ENCODE measurements at regions of chr2 and their contacts with region 1.

Region 1: DNA sequence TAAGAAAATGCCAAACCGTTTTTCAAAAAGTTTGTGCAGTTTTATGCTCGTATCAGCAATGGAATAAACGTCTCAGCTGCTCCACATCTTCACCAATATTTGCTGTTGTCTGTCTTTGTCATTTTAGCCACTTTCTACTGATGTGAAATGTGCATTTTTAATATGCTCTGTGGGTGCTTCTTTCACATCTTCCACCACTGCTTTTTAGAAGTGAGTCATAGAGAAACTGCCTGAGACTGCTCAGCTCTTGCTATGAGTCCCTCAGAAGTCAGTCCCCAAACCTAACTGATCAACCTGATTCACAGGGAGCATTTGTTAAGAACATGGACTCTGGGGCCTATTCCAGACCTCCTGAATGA is 41.0 kb upstream of the EPC2 start:
- DNase-seq: no peak
- H3K4me3 ChIP-seq: no peak overlapping the region
- H3K27ac ChIP-seq: no peak overlapping the region
- H3K4me1 ChIP-seq: no peaks in the 10 kb centered on the region
- H3K27me3 ChIP-seq: no peaks in the 10 kb centered on the region
- CTCF ChIP-seq: no peak

Region 2: GRCh38 chr2:148622366-148622765 is 18.8 kb after region 1 on chr2:
- intact Hi-C with region 1: no loop called
- DNase-seq: no peak
- H3K4me3 ChIP-seq: no peak overlapping the region
- H3K27ac ChIP-seq: no peak overlapping the region
- H3K4me1 ChIP-seq: peaks cover 0 to 2% of the 10 kb centered on the region in 2 donors
- H3K27me3 ChIP-seq: no peaks in the 10 kb centered on the region
- CTCF ChIP-seq: no peak

Region 3: DNA sequence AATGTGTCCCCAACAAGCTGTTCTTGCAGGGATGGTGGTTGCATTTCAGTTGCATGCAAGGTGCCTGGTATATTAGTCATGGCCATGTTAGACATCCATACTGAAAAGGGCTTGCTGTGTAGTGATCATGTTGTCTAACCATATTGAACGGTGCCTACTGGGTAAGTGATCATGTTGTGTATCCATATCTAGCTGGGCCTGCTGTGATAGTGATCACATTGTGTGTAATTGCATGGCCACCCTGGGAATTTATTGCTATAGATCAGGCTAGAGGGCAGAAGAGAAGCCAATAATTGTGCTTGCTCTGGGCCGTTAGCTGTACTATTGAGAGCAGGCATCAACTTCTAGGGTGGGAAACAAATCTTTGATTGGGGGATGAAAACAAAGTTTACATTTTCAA is 31.2 kb after region 1 on chr2:
- intact Hi-C with region 1: loop called (anchors 5 kb)
- DNase-seq: no peak
- H3K4me3 ChIP-seq: no peak overlapping the region
- H3K27ac ChIP-seq: no peak overlapping the region
- H3K4me1 ChIP-seq: peaks cover 0 to 6% of the 10 kb centered on the region in 2 donors
- H3K27me3 ChIP-seq: no peaks in the 10 kb centered on the region
- CTCF ChIP-seq: no peak